Body of pancreas (tissue), 4 donors: ENCODE measurements at regions of chr12 and their contacts with region 1.

Region 1: GRCh38 chr12:5083955-5084849 is 40.5 kb downstream of the KCNA5 start:
- DNase-seq: peak; percentile 22 to 43 (median 30)
- ATAC-seq: peak; percentile 53
- H3K4me3 ChIP-seq: no peak overlapping the region
- H3K27ac ChIP-seq: no peak overlapping the region
- H3K4me1 ChIP-seq: no peaks in the 10 kb centered on the region
- H3K27me3 ChIP-seq: no peaks in the 10 kb centered on the region
- CTCF ChIP-seq: peak in 6 of 7 experiments; percentile 47 to 89 (median 70)
- POLR2A ChIP-seq: no peak

Region 2: GRCh38 chr12:4857472-4858291 is 226.5 kb before region 1 on chr12:
- intact Hi-C with region 1: loop called (anchors 10 kb)
- DNase-seq: peak; percentile 68 to 81 (median 74)
- ATAC-seq: peak; percentile 82
- H3K4me3 ChIP-seq: no peak overlapping the region
- H3K27ac ChIP-seq: no peak overlapping the region
- H3K4me1 ChIP-seq: peaks cover 13% of the 10 kb centered on the region
- H3K27me3 ChIP-seq: no peaks in the 10 kb centered on the region
- CTCF ChIP-seq: peak; percentile 72 to 92 (median 76)
- POLR2A ChIP-seq: no peak

Region 3: GRCh38 chr12:5022465-5023061 is 61.6 kb before region 1 on chr12:
- intact Hi-C with region 1: loop called (anchors 2 kb)
- DNase-seq: peak; percentile 42 to 55 (median 53)
- ATAC-seq: peak; percentile 68
- H3K4me3 ChIP-seq: no peak overlapping the region
- H3K27ac ChIP-seq: no peak overlapping the region
- H3K4me1 ChIP-seq: no peaks in the 10 kb centered on the region
- H3K27me3 ChIP-seq: no peaks in the 10 kb centered on the region
- CTCF ChIP-seq: peak; percentile 67 to 85 (median 80)
- POLR2A ChIP-seq: no peak